GM12878 (cell line): ENCODE measurements at regions of chr1 and their contacts with region 1.

Region 1: DNA sequence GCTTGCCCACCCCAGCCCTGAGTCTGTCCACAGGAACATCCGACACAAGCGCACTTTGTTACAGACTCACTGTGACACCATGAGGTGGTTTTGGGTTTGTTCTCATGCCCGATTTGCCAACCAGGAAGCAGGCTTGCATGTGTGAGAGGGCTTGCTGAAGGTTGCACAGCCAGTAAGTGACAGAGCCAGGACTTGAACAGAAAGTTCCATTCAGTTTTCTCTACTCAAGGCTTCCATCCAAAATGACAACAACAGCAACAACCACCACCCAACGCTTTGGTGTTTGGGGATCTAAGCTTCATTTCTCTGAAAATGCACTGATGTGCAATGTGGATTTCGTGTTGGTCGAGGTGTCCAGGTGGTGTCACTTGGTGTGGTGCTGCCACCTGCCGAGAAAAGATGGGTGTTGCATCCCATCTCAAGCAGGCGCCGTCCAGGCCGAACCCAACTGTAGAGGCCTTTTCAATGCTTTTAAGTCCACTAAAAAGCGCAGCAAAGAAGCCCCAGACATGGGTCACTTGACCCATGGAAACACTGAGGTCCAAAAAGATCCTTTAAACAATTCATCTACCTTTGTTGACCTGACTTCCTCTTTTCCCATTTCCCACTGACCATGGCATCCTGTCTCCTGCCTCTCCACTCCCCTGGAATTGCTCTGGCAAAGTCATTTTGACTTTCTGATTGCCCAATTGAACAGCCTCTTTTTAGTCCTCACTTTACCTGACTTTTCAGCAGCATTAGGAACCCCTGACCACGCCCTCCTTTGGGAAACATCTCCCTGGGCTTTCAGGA is 12.2 kb downstream of the CITED4 start:
- DNase-seq: peak; percentile 62
- ATAC-seq: peak; percentile 92
- H3K4me3 ChIP-seq: no peak overlapping the region
- H3K27ac ChIP-seq: no peak overlapping the region
- H3K4me1 ChIP-seq: peaks cover 12% of the 10 kb centered on the region
- H3K27me3 ChIP-seq: no peaks in the 10 kb centered on the region; a peak in 1 of 4 replicates
- CTCF ChIP-seq: peak; percentile 82 to 94 (median 86)
- EP300 ChIP-seq: no peak
- POLR2A ChIP-seq: no peak
- RAD21 ChIP-seq: peak; percentile 91

Region 2: DNA sequence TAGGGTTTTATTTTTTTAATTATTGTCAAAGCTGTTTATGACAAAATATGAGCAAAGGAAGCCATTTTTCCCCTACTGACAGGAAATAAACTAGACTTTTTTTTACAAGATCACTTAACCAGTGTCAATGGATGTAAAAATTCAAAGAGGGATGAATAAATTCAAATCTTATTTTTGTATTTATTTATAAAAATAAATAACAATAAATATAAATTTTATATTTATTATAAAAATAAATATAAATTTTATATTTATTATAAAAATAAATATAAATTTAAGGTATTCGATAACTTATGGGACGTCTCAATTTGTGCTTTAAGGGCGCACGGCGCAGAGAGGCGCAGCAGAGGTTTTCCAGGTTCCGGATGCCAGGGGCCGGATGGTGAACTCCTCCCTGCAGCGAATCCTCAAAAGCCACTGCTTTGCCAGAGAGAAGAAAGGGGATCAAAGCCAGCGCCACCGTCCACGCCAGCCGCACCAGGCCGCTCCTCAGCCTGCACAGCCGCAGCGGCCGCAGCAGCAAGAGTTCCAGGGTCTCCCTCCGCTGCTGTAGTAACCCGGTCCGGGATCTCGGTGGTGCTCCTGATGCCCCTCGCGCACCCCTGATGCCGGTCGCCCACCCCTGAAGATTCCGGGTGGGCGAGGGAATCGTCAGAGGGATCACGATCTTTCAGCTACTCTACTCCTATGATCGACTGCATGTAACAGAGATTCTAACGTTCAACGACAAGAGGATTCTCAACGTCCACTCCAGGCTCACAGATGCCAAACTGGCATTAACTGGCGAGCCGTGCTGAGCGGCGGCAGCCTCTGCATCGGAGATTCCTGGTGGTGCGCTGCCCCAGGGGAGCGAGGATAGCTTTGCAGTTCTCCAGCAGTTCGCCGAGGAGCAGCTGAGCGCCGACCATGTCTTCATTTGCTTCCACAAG is 717.4 kb before region 1 on chr1:
- CTCF ChIA-PET with region 1: no interaction called
- POLR2A ChIA-PET with region 1: no interaction called
- RAD21 ChIA-PET with region 1: no interaction called
- SMC1A ChIA-PET with region 1: no interaction called
- in situ Hi-C with region 1: no loop called
- intact Hi-C with region 1: no loop called
- DNase-seq: no peak
- ATAC-seq: no peak
- H3K4me3 ChIP-seq: no peak overlapping the region
- H3K27ac ChIP-seq: no peak overlapping the region
- H3K4me1 ChIP-seq: no peaks in the 10 kb centered on the region
- H3K27me3 ChIP-seq: no peaks in the 10 kb centered on the region; a peak in 1 of 4 replicates
- CTCF ChIP-seq: no peak
- EP300 ChIP-seq: no peak
- POLR2A ChIP-seq: no peak
- RAD21 ChIP-seq: no peak

Region 3: DNA sequence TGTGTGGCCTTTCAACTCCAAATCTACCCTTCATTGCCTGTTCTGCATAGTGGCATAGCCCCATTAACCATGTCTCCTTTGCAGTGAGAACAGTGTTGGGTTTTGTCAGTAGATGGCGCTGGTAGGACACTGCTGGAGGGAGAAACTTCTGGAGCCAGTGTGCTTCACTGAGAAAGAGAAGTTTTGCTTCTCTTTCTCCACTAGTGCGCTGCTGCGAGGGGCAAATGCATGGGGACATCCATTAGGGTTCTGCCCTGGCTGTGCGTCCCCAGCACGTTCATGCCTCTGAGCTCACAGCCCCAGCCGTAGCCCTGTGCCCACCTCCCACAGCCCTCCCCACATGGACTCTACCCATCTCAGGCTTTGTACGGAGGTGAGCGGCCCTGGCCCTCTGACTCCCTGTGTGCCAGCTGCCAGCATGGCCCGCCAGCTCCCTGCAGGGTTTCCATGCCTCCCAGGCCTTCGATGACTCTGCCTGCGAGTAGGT is 237.6 kb before region 1 on chr1:
- CTCF ChIA-PET with region 1: interaction called, 18 read pairs
- POLR2A ChIA-PET with region 1: no interaction called
- RAD21 ChIA-PET with region 1: interaction called, 3 read pairs
- SMC1A ChIA-PET with region 1: interaction called, 5 read pairs
- in situ Hi-C with region 1: loop called (anchors 5 kb)
- intact Hi-C with region 1: loop called (anchors 1 kb)
- DNase-seq: peak; percentile 46
- ATAC-seq: peak; percentile 100
- H3K4me3 ChIP-seq: no peak overlapping the region
- H3K27ac ChIP-seq: no peak overlapping the region
- H3K4me1 ChIP-seq: 0 out of 2 replicates have a peak, but pooled peaks cover 3% of the 10 kb centered on the region
- H3K27me3 ChIP-seq: no peaks in the 10 kb centered on the region
- CTCF ChIP-seq: peak; percentile 91 to 97 (median 93)
- EP300 ChIP-seq: no peak
- POLR2A ChIP-seq: no peak
- RAD21 ChIP-seq: peak; percentile 96

Region 4: GRCh38 chr1:40625066-40625465 is 224.9 kb before region 1 on chr1:
- CTCF ChIA-PET with region 1: interaction called, 7 read pairs
- POLR2A ChIA-PET with region 1: no interaction called
- RAD21 ChIA-PET with region 1: no interaction called
- SMC1A ChIA-PET with region 1: interaction called, 5 read pairs
- in situ Hi-C with region 1: no loop called
- intact Hi-C with region 1: loop called (anchors 5 kb)
- DNase-seq: no peak
- ATAC-seq: peak; percentile 35
- H3K4me3 ChIP-seq: no peak overlapping the region
- H3K27ac ChIP-seq: no peak overlapping the region
- H3K4me1 ChIP-seq: peaks cover 15% of the 10 kb centered on the region
- H3K27me3 ChIP-seq: no peaks in the 10 kb centered on the region
- CTCF ChIP-seq: peak in 2 of 3 experiments; percentile 44 to 45; a peak in 3 of 6 replicates
- EP300 ChIP-seq: no peak
- POLR2A ChIP-seq: no peak
- RAD21 ChIP-seq: peak; percentile 20; the same call in 1 of the 2 replicates

Region 5: GRCh38 chr1:40755067-40755466 is 94.9 kb before region 1 on chr1:
- CTCF ChIA-PET with region 1: interaction called, 11 read pairs
- POLR2A ChIA-PET with region 1: no interaction called
- RAD21 ChIA-PET with region 1: no interaction called
- SMC1A ChIA-PET with region 1: no interaction called
- in situ Hi-C with region 1: no loop called
- intact Hi-C with region 1: no loop called
- DNase-seq: no peak
- ATAC-seq: no peak
- H3K4me3 ChIP-seq: no peak overlapping the region
- H3K27ac ChIP-seq: no peak overlapping the region
- H3K4me1 ChIP-seq: peaks cover 24% of the 10 kb centered on the region
- H3K27me3 ChIP-seq: no peaks in the 10 kb centered on the region
- CTCF ChIP-seq: no peak
- EP300 ChIP-seq: no peak
- POLR2A ChIP-seq: no peak
- RAD21 ChIP-seq: no peak

Region 6: DNA sequence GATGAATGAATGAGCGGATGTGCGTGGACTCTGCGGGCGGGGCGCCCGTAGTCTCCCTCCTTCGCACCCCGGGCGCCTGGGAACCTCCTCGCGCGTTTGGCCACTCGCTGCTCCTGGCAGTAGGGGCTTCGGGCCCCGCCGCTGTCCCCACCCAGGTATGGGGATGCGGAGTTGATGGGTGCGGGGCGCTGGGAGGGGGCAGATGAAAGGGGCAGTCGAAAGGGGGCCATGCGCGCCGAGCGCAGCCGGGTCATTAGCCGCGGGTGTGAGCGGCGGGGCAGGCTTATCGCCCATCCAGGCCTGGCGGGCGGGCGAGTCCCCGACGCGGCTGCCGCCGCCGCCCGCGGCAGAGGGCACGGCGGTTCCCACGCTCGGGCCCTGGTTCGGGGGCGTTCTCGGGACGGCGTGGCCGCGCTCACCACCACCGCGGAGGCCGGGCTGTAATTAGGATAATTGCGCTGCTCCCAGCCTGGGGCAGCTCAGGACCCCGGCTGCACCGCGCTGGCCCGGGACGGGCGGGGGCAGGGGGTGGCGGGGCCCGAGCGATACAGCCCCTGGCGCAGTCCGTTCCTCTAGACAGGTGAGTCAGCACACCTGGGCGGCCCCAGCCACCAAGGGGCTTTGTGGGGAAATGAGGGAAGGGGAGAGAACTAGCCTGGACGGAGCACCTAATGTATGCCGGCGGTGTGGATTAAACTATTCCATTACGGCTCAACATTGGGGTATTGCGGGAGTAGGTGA is 34.2 kb after region 1 on chr1:
- CTCF ChIA-PET with region 1: no interaction called
- POLR2A ChIA-PET with region 1: no interaction called
- RAD21 ChIA-PET with region 1: no interaction called
- SMC1A ChIA-PET with region 1: no interaction called
- in situ Hi-C with region 1: no loop called
- intact Hi-C with region 1: no loop called
- DNase-seq: no peak
- ATAC-seq: no peak
- H3K4me3 ChIP-seq: no peak overlapping the region
- H3K27ac ChIP-seq: no peak overlapping the region
- H3K4me1 ChIP-seq: no peaks in the 10 kb centered on the region
- H3K27me3 ChIP-seq: no peaks in the 10 kb centered on the region; a peak in 1 of 4 replicates
- CTCF ChIP-seq: no peak
- EP300 ChIP-seq: no peak
- POLR2A ChIP-seq: no peak
- RAD21 ChIP-seq: no peak